ENCODE measurements at regions of chr15 and their contacts with region 1.

Region 1: DNA sequence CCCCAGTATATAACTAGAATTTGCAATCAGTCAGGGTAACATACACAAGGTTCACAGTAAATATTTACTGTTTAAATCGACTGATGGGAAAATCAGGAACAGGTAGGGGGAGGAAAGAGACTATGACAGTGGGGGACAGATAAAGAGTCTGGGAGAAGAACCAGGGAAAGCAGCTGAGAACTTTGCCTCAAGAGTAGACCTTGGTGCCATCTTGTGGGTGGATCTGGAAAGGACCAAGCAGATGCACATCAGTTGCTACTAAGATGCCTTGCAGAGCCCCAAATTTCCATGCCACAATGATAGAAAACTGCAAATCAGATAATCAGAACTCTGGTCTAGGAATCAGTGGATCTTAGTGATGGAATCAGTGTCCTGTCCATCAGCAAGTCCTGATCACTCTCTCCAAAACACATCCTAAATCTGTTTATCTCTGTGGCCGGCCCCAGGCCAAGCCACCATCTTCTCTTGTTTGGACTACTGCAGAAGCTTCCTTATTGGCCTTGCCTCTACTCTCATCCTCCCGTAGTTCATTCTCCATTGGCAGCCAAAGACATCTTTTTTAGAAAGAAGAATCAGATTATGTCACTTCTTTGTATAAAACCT is 62.7 kb downstream of the PDE8A start:
- DNase-seq: no peak
- H3K4me3 ChIP-seq: no peak overlapping the region
- H3K27ac ChIP-seq: no peak overlapping the region
- H3K4me1 ChIP-seq: peaks cover 20 to 46% (median 44%) of the 10 kb centered on the region in 4 donors
- H3K27me3 ChIP-seq: no peaks in the 10 kb centered on the region
- CTCF ChIP-seq: peak; percentile 66 to 74 (median 69)
- EP300 ChIP-seq: no peak
- POLR2A ChIP-seq: no peak

Region 2: GRCh38 chr15:84588053-84588874 is 456.1 kb before region 1 on chr15:
- intact Hi-C with region 1: loop called (anchors 5 kb)
- DNase-seq: peak; percentile 94
- H3K4me3 ChIP-seq: peak overlapping the region; percentile 35 to 50 (median 38)
- H3K27ac ChIP-seq: no peak overlapping the region
- H3K4me1 ChIP-seq: peaks cover 0 to 11% (median 9%) of the 10 kb centered on the region in 4 donors
- H3K27me3 ChIP-seq: no peaks in the 10 kb centered on the region
- CTCF ChIP-seq: peak in 2 of 3 experiments; percentile 67 to 89
- EP300 ChIP-seq: no peak
- POLR2A ChIP-seq: no peak

Region 3: DNA sequence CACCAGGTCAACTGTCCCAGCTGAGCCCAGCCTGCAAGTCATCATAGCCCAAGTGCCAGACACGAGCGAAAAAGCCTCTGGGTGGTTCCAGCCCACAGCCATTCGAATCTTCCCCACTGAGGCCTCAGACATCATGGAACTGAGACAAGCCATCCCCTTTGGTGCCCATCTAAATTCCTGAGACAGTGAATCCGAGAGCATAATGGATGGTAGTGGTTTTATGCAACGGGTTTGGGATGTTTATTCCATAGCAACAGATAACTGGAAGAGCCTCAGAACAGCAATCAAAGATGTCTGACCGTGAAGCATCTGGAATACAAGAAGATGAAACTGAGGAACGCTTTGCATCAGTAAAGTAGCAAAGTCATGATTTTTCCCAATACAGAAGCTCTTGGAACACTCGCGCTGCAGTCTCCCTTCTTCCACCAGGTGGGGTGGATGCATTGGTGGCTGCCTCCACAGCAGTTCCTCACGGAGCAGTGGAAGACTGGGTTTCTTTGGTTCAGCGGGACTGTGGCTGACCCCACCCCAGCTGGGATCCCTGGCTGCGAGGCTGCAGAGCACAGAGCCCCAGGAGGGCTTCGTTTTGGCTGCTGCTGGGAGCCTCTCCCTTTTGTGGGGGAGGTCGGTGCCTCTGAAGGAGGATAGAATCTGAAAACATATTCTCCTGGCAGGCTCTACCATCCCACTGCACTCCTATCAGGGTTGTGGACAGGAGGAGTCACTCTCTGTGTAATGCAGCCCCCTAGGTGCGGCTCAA is 89.1 kb before region 1 on chr15:
- intact Hi-C with region 1: loop called (anchors 1 kb)
- DNase-seq: no peak
- H3K4me3 ChIP-seq: peak overlapping the region; percentile 33 to 50 (median 36)
- H3K27ac ChIP-seq: no peak overlapping the region
- H3K4me1 ChIP-seq: peaks cover 0 to 9% (median 9%) of the 10 kb centered on the region in 4 donors
- H3K27me3 ChIP-seq: no peaks in the 10 kb centered on the region
- CTCF ChIP-seq: peak; percentile 90 to 94 (median 92)
- EP300 ChIP-seq: no peak
- POLR2A ChIP-seq: no peak

Region 4: GRCh38 chr15:84981054-84981710 is 63.2 kb before region 1 on chr15:
- intact Hi-C with region 1: loop called (anchors 10 kb)
- DNase-seq: peak; percentile 96
- H3K4me3 ChIP-seq: peak overlapping the region; percentile 78 to 95 (median 87)
- H3K27ac ChIP-seq: peak overlapping the region; percentile 93 to 98 (median 96)
- H3K4me1 ChIP-seq: peaks cover 28 to 49% (median 45%) of the 10 kb centered on the region in 4 donors
- H3K27me3 ChIP-seq: no peaks in the 10 kb centered on the region
- CTCF ChIP-seq: peak in 2 of 3 experiments; percentile 27 to 42
- EP300 ChIP-seq: no peak
- POLR2A ChIP-seq: peak; percentile 69

Region 5: GRCh38 chr15:85592148-85592547 is 547.8 kb after region 1 on chr15:
- intact Hi-C with region 1: no loop called
- DNase-seq: no peak
- H3K4me3 ChIP-seq: no peak overlapping the region
- H3K27ac ChIP-seq: peak overlapping the region; percentile 24 to 70 (median 51)
- H3K4me1 ChIP-seq: peaks cover 53 to 78% (median 73%) of the 10 kb centered on the region in 4 donors
- H3K27me3 ChIP-seq: no peaks in the 10 kb centered on the region
- CTCF ChIP-seq: peak in 1 of 3 experiments; percentile 24
- EP300 ChIP-seq: no peak
- POLR2A ChIP-seq: no peak